Activated CD4-positive, alpha-beta memory T cell treated with anti-CD3 and anti-CD28 coated beads for 36 hours (primary cell): ENCODE measurements at regions of chr11 and their contacts with region 1.

Region 1: GRCh38 chr11:34653826-34654490 is 33.1 kb downstream of the EHF start:
- DNase-seq: peak; percentile 47
- H3K4me3 Mint-ChIP-seq: no peak overlapping the region
- H3K27ac Mint-ChIP-seq: no peak overlapping the region
- H3K4me1 Mint-ChIP-seq: peaks cover 48% of the 10 kb centered on the region
- H3K27me3 Mint-ChIP-seq: peaks cover 44% of the 10 kb centered on the region

Region 2: GRCh38 chr11:33893711-33894397 is 760.1 kb before region 1 on chr11:
- CTCF ChIA-PET with region 1: no interaction called
- POLR2A ChIA-PET with region 1: no interaction called
- intact Hi-C with region 1: loop called (anchors 1 kb)
- DNase-seq: peak; percentile 88
- H3K4me3 Mint-ChIP-seq: peak overlapping the region; percentile 25
- H3K27ac Mint-ChIP-seq: no peak overlapping the region
- H3K4me1 Mint-ChIP-seq: peaks cover 31% of the 10 kb centered on the region
- H3K27me3 Mint-ChIP-seq: peaks cover 73% of the 10 kb centered on the region

Region 3: DNA sequence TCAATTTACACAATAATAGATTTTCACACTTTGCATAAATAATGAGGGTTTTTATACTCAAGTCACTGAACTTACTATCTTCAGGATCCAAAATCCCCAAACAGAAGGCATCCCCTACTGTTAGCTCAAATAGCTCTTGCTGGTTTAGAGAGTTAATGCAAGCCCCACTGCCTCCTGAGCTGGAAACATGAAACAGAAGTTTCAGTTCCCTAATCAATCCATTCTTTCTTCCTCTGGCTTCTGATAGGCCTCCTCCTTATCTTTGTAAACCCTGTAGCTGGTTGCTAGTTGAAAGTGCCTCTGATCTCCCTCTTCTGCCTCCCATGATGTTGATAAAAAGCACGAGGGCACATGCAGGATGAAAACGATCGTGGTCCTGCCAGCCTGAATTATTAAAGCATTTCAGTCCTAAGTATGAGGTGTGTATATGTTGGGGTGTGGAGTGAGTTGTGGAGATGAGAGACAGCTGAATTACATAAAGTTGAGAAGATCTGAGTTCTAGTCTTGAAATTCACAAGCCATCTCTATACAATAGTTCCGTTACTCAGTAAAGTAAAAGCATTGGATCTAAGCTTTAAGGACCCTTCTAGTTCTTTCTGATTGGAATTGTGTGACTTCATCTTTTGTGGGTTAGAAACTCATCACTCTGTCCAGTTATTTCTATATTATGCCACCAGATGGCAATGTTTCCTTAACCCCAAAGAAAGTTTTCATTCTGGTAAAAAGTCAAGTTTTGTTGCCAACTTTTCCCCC is 68.0 kb before region 1 on chr11:
- CTCF ChIA-PET with region 1: interaction called, 8 read pairs
- POLR2A ChIA-PET with region 1: no interaction called
- intact Hi-C with region 1: loop called (anchors 1 kb)
- DNase-seq: no peak
- H3K4me3 Mint-ChIP-seq: no peak overlapping the region
- H3K27ac Mint-ChIP-seq: no peak overlapping the region
- H3K4me1 Mint-ChIP-seq: no peaks in the 10 kb centered on the region
- H3K27me3 Mint-ChIP-seq: peaks cover 14% of the 10 kb centered on the region

Region 4: DNA sequence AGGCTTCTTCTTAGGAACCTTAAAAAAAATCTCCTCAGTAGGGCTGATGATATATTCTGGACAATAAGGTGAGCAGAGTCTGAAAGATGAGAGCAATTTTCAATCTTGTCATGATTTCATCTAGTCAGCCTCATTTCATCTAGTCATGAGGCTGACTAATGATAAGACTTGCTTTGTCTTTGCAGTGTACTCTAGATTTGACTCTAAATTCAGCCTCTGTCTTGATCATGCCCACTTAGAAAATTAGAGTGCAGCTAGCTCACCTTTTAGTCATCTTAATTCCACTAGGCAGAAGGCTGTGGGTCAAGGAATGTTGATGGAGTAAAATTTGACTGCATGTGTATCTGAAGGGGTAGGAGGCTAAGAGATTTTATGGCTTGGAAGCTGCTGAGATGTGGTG is 27.6 kb before region 1 on chr11:
- CTCF ChIA-PET with region 1: interaction called, 3 read pairs
- POLR2A ChIA-PET with region 1: interaction called, 3 read pairs
- intact Hi-C with region 1: loop called (anchors 1 kb)
- DNase-seq: no peak
- H3K4me3 Mint-ChIP-seq: no peak overlapping the region
- H3K27ac Mint-ChIP-seq: no peak overlapping the region
- H3K4me1 Mint-ChIP-seq: peaks cover 13% of the 10 kb centered on the region
- H3K27me3 Mint-ChIP-seq: peaks cover 39% of the 10 kb centered on the region

Region 5: DNA sequence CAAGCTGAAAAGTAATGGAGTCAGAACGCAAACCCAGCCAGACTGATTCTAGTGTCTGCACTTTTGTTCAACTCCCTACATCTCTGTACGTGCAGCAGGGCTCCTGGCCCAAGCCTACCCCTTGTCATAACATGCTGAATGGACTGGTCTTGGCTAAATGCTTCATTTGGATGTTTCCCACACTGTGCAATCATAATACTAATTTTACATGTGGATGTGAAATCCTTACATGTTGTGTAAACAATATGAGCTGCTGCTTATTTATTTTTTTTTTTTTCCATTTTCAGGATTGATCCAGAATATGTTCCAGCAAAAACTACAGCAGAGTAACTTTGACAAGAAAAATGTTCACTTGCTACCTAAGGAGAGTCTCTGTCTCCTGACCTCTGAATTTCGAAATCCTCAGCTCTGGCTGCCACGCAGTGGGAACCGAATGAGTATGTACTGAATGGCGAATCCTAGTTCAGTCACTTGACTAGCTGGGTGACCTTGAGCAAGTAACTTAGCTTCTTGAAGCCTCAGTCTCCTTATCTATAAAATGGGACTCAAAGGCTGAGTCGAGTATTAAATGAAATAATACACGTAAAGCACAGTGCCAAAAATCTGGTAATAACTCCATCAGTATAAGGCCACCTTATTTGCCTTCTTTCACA is 100.3 kb after region 1 on chr11:
- CTCF ChIA-PET with region 1: no interaction called
- POLR2A ChIA-PET with region 1: no interaction called
- intact Hi-C with region 1: no loop called
- DNase-seq: no peak
- H3K4me3 Mint-ChIP-seq: no peak overlapping the region
- H3K27ac Mint-ChIP-seq: no peak overlapping the region
- H3K4me1 Mint-ChIP-seq: no peaks in the 10 kb centered on the region
- H3K27me3 Mint-ChIP-seq: peaks cover 10% of the 10 kb centered on the region

Region 6: DNA sequence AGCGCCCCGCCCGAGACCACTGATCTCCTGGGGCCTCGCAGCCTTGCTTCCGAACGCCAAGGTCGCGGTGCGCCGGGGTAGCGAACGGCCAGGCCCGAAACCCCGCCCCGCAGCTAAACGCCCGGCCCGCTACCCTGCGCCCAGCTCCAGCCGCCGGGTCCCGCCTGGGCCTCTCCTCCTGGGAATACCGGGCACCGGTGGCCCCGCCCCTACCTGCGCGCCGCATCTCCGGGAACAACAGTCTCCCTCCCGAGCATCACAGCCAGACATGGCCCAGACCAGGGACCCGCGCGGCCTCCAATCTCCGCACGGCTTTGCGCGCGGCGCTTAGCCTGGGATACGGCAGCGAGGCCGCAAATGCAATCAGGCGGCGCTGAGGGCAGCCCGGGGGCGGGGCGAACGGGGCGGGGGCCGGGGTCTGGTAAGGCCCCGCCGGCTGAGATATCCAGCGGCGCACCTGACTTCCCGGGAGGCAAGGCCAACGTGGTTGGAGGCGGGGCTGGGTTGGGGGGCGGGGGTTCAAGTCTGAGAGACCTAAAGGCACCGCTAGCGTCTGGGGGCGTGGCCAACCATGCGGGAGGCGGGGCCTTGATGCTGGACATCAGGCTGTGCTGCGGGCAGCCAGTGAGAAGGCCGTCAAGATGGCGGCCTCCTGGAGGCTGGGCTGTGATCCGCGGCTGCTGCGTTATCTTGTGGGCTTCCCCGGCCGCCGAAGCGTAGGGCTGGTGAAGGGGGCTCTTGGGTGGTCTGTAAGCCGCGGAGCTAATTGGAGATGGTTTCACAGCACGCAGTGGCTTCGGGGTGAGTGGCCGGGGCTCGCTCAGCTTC is 262.3 kb after region 1 on chr11 and contains the starts of genes APIP and PDHX:
- CTCF ChIA-PET with region 1: no interaction called
- POLR2A ChIA-PET with region 1: interaction called, 4 read pairs
- intact Hi-C with region 1: loop called (anchors 1 kb)
- DNase-seq: peak; percentile 98
- H3K4me3 Mint-ChIP-seq: peak within 1 kb of the TSS; percentile 91
- H3K27ac Mint-ChIP-seq: peak within 1 kb of the TSS; percentile 88
- H3K4me1 Mint-ChIP-seq: peaks cover 37% of the 10 kb centered on the region
- H3K27me3 Mint-ChIP-seq: no peaks in the 10 kb centered on the region
- total RNA-seq, gene APIP: 31.2 to 32.9 TPM
- total RNA-seq, gene PDHX: 34.5 to 35.5 TPM

Region 7: GRCh38 chr11:35237860-35238715 is 584.1 kb after region 1 on chr11:
- CTCF ChIA-PET with region 1: no interaction called
- POLR2A ChIA-PET with region 1: no interaction called
- intact Hi-C with region 1: loop called (anchors 1 kb)
- DNase-seq: peak; percentile 68
- H3K4me3 Mint-ChIP-seq: no peak overlapping the region
- H3K27ac Mint-ChIP-seq: no peak overlapping the region
- H3K4me1 Mint-ChIP-seq: peaks cover 72% of the 10 kb centered on the region
- H3K27me3 Mint-ChIP-seq: no peaks in the 10 kb centered on the region